ENCODE measurements at regions of chr7 and their contacts with region 1.

Region 1: DNA sequence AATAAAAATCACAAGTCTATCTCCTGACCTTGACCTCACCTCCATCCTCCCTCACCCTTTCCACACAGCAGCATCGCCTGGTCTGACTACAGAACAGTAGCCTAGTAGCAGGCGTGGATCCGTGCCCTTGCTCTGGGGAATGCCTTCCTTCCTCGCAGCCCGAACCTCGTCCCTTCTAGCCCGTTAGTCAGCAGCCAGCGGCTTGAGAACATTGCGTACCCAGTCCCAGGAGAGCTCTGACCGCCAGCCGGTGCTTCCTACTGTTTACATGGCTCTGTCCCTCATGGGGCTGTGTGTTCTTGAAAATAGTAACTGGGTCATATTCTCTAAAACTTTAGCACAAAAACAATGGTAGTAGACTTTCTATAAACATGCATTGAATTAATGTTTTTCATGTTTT is 682.7 kb upstream of the IGFBP3 start:
- DNase-seq: peak; percentile 94
- ATAC-seq: peak; percentile 92

Region 2: DNA sequence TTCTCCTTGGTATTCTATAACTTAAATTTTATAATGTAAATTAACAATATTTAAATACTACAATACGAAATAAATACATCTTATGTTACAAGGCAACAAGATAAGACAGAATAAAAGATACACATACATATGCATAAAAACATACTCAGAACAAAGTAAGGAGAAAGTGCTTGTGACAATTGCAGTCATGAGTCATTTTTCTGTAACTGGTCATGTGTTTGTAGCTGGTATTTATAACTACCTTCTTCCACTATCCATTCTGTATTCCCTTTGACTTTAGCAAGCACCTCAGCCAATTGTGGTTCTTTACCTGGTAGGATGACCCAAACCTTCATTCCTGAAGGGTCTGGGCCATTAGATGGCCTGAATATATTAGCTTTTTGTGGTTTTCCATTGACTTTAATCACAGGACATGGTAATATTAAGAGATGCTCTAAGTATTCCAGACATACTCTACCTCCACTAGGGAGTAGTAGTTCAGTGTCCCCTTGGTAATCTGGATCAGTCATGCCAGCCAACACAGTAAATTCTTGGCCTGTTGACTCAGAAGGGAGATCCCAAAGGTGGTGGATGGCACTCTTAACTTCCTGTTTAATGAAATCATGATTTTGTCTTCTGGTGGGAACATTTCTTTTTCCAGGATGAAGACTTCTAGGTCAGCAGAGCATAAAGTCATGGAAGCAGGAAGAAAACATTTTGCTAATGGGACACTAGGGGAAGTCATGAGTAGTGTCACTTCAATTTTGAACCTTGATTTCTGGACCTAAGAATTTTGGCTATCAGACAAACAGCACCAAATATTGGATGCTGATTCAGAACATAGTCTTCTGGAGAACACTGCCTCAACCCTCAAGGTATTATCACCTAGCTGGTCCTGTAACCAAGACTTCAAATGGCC is 51.0 kb after region 1 on chr7:
- intact Hi-C with region 1: no loop called
- DNase-seq: no peak
- ATAC-seq: no peak

Region 3: DNA sequence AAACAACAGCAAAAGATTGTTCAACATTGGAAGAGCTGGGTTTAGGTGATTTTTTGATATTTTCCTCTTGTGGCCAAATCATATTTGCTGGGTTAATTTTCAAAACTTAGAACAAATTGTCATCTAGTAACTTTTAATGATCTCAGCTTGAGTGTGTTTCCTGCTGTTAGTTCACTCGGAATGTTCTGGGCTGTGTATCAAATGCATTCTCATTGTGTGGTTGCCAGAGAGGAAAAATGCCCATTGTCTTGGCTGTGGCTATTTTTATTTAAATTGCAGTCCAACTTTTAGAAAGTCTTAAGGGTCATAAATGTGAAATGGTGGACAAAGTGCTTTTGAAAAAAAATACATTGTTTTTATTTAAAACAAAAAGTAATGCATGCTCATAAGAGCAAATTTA is 436.1 kb after region 1 on chr7:
- intact Hi-C with region 1: loop called (anchors 5 kb)
- DNase-seq: no peak
- ATAC-seq: peak; percentile 59